Naive thymus-derived CD4-positive, alpha-beta T cell (primary cell): ENCODE measurements at regions of chr6 and their contacts with region 1.

Region 1: GRCh38 chr6:24991810-24992467 is 56.2 kb upstream of the RIPOR2 start:
- DNase-seq: peak; percentile 34 to 88 (median 81)
- ATAC-seq: peak; percentile 97
- H3K4me3 ChIP-seq: peak overlapping the region; percentile 37
- H3K4me3 Mint-ChIP-seq: peak overlapping the region; percentile 2 to 81 (median 68)
- H3K27ac ChIP-seq: peak overlapping the region; percentile 61
- H3K27ac Mint-ChIP-seq: peak overlapping the region; percentile 73 to 96 (median 88)
- H3K4me1 ChIP-seq: peaks cover 11 to 29% of the 10 kb centered on the region in 2 donors
- H3K4me1 Mint-ChIP-seq: peaks cover 47 to 88% (median 81%) of the 10 kb centered on the region in 7 donors
- H3K27me3 ChIP-seq: no peaks in the 10 kb centered on the region
- H3K27me3 Mint-ChIP-seq: no peaks in the 10 kb centered on the region

Region 2: DNA sequence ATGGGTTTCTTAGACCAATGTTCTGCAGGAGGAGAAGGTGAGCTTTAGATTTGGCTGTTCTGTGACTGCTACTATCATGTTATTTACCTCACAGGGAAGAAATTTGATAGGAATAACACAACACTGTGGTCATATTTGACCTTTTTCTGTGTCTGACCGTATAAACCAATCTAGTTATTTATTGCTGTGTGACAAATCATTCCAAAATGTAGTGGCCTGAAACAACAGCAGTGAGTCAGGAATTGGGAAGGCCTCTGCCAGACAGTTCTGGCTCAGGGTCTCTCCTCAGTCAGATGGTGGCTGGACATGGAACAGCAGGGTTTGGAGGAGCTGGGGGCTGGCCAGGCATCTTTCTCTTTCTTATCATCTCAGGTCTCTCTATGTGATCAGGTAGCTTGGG is 89.2 kb before region 1 on chr6:
- CTCF ChIA-PET with region 1: interaction called, 54 read pairs
- POLR2A ChIA-PET with region 1: interaction called, 19 read pairs
- intact Hi-C with region 1: loop called in 1 of 2 experiments (anchors 1 kb)
- DNase-seq: no peak
- ATAC-seq: no peak
- H3K4me3 ChIP-seq: no peak overlapping the region
- H3K4me3 Mint-ChIP-seq: peak overlapping the region; percentile 30 to 97 (median 59)
- H3K27ac ChIP-seq: peak overlapping the region; percentile 53
- H3K27ac Mint-ChIP-seq: peak overlapping the region; percentile 32 to 99 (median 91)
- H3K4me1 ChIP-seq: peaks cover 81 to 96% of the 10 kb centered on the region in 2 donors
- H3K4me1 Mint-ChIP-seq: peaks cover 69 to 99% (median 96%) of the 10 kb centered on the region in 7 donors
- H3K27me3 ChIP-seq: no peaks in the 10 kb centered on the region
- H3K27me3 Mint-ChIP-seq: no peaks in the 10 kb centered on the region

Region 3: GRCh38 chr6:24927985-24928745 is 63.8 kb before region 1 on chr6:
- CTCF ChIA-PET with region 1: interaction called, 293 read pairs
- POLR2A ChIA-PET with region 1: interaction called, 733 read pairs
- intact Hi-C with region 1: no loop called
- DNase-seq: peak in 1 of 9 donors; percentile 55
- ATAC-seq: no peak
- H3K4me3 ChIP-seq: peak overlapping the region; percentile 89
- H3K4me3 Mint-ChIP-seq: peak overlapping the region; percentile 83 to 100 (median 98)
- H3K27ac ChIP-seq: peak overlapping the region; percentile 85
- H3K27ac Mint-ChIP-seq: peak overlapping the region; percentile 84 to 99 (median 93)
- H3K4me1 ChIP-seq: peaks cover 47 to 72% of the 10 kb centered on the region in 2 donors
- H3K4me1 Mint-ChIP-seq: peaks cover 69 to 83% (median 73%) of the 10 kb centered on the region in 7 donors
- H3K27me3 ChIP-seq: no peaks in the 10 kb centered on the region
- H3K27me3 Mint-ChIP-seq: peaks cover 0 to 2% (median 0%) of the 10 kb centered on the region in 5 donors

Region 4: GRCh38 chr6:24949020-24949569 is 42.8 kb before region 1 on chr6:
- CTCF ChIA-PET with region 1: interaction called, 85 read pairs
- POLR2A ChIA-PET with region 1: interaction called, 1,138 read pairs
- intact Hi-C with region 1: loop called (anchors 1 kb)
- DNase-seq: peak in 7 of 9 donors; percentile 67 to 93 (median 83)
- ATAC-seq: peak; percentile 72
- H3K4me3 ChIP-seq: peak overlapping the region; percentile 50
- H3K4me3 Mint-ChIP-seq: peak overlapping the region; percentile 71 to 86 (median 76)
- H3K27ac ChIP-seq: peak overlapping the region; percentile 75
- H3K27ac Mint-ChIP-seq: peak overlapping the region; percentile 92 to 98 (median 95)
- H3K4me1 ChIP-seq: peaks cover 62 to 68% of the 10 kb centered on the region in 2 donors
- H3K4me1 Mint-ChIP-seq: peaks cover 63 to 91% (median 75%) of the 10 kb centered on the region in 7 donors
- H3K27me3 ChIP-seq: no peaks in the 10 kb centered on the region
- H3K27me3 Mint-ChIP-seq: no peaks in the 10 kb centered on the region

Region 5: GRCh38 chr6:24974182-24975171 is 17.5 kb before region 1 on chr6:
- CTCF ChIA-PET with region 1: interaction called, 20 read pairs
- POLR2A ChIA-PET with region 1: interaction called, 45 read pairs
- intact Hi-C with region 1: loop called in 1 of 2 experiments (anchors 2 kb)
- DNase-seq: peak in 1 of 9 donors; percentile 40
- ATAC-seq: peak; percentile 73
- H3K4me3 ChIP-seq: peak overlapping the region; percentile 6
- H3K4me3 Mint-ChIP-seq: peak overlapping the region in 3 of 10 donors; percentile 2 to 58 (median 20)
- H3K27ac ChIP-seq: no peak overlapping the region
- H3K27ac Mint-ChIP-seq: peak overlapping the region in 7 of 9 donors; percentile 1 to 90 (median 27)
- H3K4me1 ChIP-seq: peaks cover 19 to 31% of the 10 kb centered on the region in 2 donors
- H3K4me1 Mint-ChIP-seq: peaks cover 41 to 80% (median 72%) of the 10 kb centered on the region in 7 donors
- H3K27me3 ChIP-seq: no peaks in the 10 kb centered on the region
- H3K27me3 Mint-ChIP-seq: no peaks in the 10 kb centered on the region

Region 6: GRCh38 chr6:25017932-25018567 is 26.1 kb after region 1 on chr6:
- CTCF ChIA-PET with region 1: interaction called, 24 read pairs
- POLR2A ChIA-PET with region 1: interaction called, 19 read pairs
- intact Hi-C with region 1: loop called (anchors 1 kb)
- DNase-seq: peak; percentile 52 to 86 (median 81)
- ATAC-seq: peak; percentile 88
- H3K4me3 ChIP-seq: no peak overlapping the region
- H3K4me3 Mint-ChIP-seq: peak overlapping the region in 9 of 10 donors; percentile 35 to 79 (median 67)
- H3K27ac ChIP-seq: peak overlapping the region; percentile 61
- H3K27ac Mint-ChIP-seq: peak overlapping the region; percentile 40 to 98 (median 94)
- H3K4me1 ChIP-seq: peaks cover 9 to 34% of the 10 kb centered on the region in 2 donors
- H3K4me1 Mint-ChIP-seq: peaks cover 25 to 48% (median 39%) of the 10 kb centered on the region in 7 donors
- H3K27me3 ChIP-seq: no peaks in the 10 kb centered on the region
- H3K27me3 Mint-ChIP-seq: no peaks in the 10 kb centered on the region

Region 7: GRCh38 chr6:25250878-25251277 is 258.9 kb after region 1 on chr6:
- CTCF ChIA-PET with region 1: no interaction called
- POLR2A ChIA-PET with region 1: no interaction called
- intact Hi-C with region 1: no loop called
- DNase-seq: no peak
- ATAC-seq: no peak
- H3K4me3 ChIP-seq: no peak overlapping the region
- H3K4me3 Mint-ChIP-seq: no peak overlapping the region
- H3K27ac ChIP-seq: no peak overlapping the region
- H3K27ac Mint-ChIP-seq: no peak overlapping the region
- H3K4me1 ChIP-seq: no peaks in the 10 kb centered on the region
- H3K4me1 Mint-ChIP-seq: peaks cover 0 to 6% (median 0%) of the 10 kb centered on the region in 7 donors
- H3K27me3 ChIP-seq: no peaks in the 10 kb centered on the region
- H3K27me3 Mint-ChIP-seq: peaks cover 5 to 20% (median 10%) of the 10 kb centered on the region in 5 donors

Region 8: DNA sequence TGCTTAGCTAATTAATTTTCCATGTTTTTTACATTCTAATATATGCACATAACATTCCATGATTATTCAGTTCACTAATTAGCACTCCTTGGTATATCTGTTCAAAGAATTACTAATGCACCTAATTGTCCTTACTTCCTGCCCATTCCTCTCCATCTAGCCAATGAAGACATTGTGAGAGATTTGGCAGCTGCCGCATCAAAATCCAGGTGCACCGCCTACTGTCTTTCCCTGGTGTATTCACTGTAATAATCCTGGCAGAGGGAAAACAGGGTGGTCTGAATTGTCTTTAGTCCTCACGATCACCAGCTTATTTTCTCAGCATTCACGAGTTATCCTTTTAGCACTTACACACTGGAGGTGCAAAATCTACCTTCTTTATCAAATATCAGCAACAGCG is 599.0 kb after region 1 on chr6:
- CTCF ChIA-PET with region 1: no interaction called
- POLR2A ChIA-PET with region 1: no interaction called
- intact Hi-C with region 1: no loop called
- DNase-seq: no peak
- ATAC-seq: no peak
- H3K4me3 ChIP-seq: no peak overlapping the region
- H3K4me3 Mint-ChIP-seq: no peak overlapping the region
- H3K27ac ChIP-seq: no peak overlapping the region
- H3K27ac Mint-ChIP-seq: no peak overlapping the region
- H3K4me1 ChIP-seq: no peaks in the 10 kb centered on the region
- H3K4me1 Mint-ChIP-seq: no peaks in the 10 kb centered on the region
- H3K27me3 ChIP-seq: no peaks in the 10 kb centered on the region
- H3K27me3 Mint-ChIP-seq: peaks cover 0 to 2% (median 0%) of the 10 kb centered on the region in 5 donors